Activated CD4-positive, alpha-beta T cell treated with anti-CD3 and anti-CD28 coated beads for 36 hours (primary cell): ENCODE measurements at regions of chr16 and their contacts with region 1.

Region 1: DNA sequence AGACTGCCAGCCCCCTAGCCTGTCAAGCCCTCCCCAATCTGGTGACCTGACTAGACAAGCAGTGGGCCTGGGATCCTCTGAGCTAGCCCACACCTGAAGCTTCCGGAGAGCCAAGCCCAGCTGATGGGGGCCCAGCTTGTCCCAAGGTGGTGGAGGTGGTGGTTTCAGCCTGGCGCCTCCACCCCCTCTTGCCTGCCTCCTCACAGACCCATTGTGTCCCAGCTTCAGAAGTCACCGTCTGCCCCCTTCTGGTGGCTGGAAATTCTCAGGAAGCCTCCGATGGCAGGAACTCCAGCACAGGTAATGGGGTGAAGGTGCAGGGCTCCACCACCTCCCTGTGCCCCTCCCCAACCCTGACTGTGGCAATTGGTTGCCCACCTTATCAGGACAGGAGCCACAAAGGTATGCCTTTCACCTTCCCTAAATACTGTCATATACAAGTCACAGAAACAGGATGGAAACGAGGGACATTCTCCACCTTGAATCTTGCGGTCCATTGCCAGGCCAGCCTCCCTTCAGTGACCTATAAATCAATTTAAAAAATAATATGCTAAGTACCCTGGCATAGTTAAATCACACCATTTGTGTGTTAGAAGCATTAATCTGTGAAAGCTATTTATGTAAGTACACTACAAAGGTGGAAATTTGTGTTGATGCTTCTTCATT is 66.0 kb upstream of the ZNF423 start:
- DNase-seq: peak; percentile 72
- ATAC-seq: peak; percentile 74
- H3K4me3 Mint-ChIP-seq: no peak overlapping the region
- H3K27ac Mint-ChIP-seq: no peak overlapping the region
- H3K4me1 Mint-ChIP-seq: no peaks in the 10 kb centered on the region
- H3K27me3 Mint-ChIP-seq: peaks cover 3% of the 10 kb centered on the region

Region 2: GRCh38 chr16:48911700-48912099 is 1010.2 kb before region 1 on chr16:
- CTCF ChIA-PET with region 1: no interaction called
- POLR2A ChIA-PET with region 1: no interaction called
- intact Hi-C with region 1: no loop called
- DNase-seq: no peak
- ATAC-seq: no peak
- H3K4me3 Mint-ChIP-seq: no peak overlapping the region
- H3K27ac Mint-ChIP-seq: no peak overlapping the region
- H3K4me1 Mint-ChIP-seq: no peaks in the 10 kb centered on the region
- H3K27me3 Mint-ChIP-seq: no peaks in the 10 kb centered on the region

Region 3: GRCh38 chr16:49491771-49492761 is 429.9 kb before region 1 on chr16:
- CTCF ChIA-PET with region 1: interaction called, 3 read pairs
- POLR2A ChIA-PET with region 1: no interaction called
- intact Hi-C with region 1: loop called in 1 of 2 experiments (anchors 2 kb)
- DNase-seq: peak; percentile 69
- ATAC-seq: peak; percentile 64
- H3K4me3 Mint-ChIP-seq: no peak overlapping the region
- H3K27ac Mint-ChIP-seq: no peak overlapping the region
- H3K4me1 Mint-ChIP-seq: no peaks in the 10 kb centered on the region
- H3K27me3 Mint-ChIP-seq: peaks cover 2% of the 10 kb centered on the region

Region 4: GRCh38 chr16:49855280-49855821 is 66.6 kb before region 1 on chr16:
- CTCF ChIA-PET with region 1: interaction called, 3 read pairs
- POLR2A ChIA-PET with region 1: no interaction called
- intact Hi-C with region 1: loop called (anchors 5 kb)
- DNase-seq: peak; percentile 65
- ATAC-seq: peak; percentile 43
- H3K4me3 Mint-ChIP-seq: peak overlapping the region; percentile 32
- H3K27ac Mint-ChIP-seq: no peak overlapping the region
- H3K4me1 Mint-ChIP-seq: peaks cover 5% of the 10 kb centered on the region
- H3K27me3 Mint-ChIP-seq: peaks cover 40% of the 10 kb centered on the region

Region 5: GRCh38 chr16:49869731-49870130 is 52.2 kb before region 1 on chr16:
- CTCF ChIA-PET with region 1: no interaction called
- POLR2A ChIA-PET with region 1: no interaction called
- intact Hi-C with region 1: no loop called
- DNase-seq: no peak
- ATAC-seq: no peak
- H3K4me3 Mint-ChIP-seq: no peak overlapping the region
- H3K27ac Mint-ChIP-seq: no peak overlapping the region
- H3K4me1 Mint-ChIP-seq: no peaks in the 10 kb centered on the region
- H3K27me3 Mint-ChIP-seq: peaks cover 6% of the 10 kb centered on the region